ENCODE measurements at regions of chr9 and their contacts with region 1.

Region 1: DNA sequence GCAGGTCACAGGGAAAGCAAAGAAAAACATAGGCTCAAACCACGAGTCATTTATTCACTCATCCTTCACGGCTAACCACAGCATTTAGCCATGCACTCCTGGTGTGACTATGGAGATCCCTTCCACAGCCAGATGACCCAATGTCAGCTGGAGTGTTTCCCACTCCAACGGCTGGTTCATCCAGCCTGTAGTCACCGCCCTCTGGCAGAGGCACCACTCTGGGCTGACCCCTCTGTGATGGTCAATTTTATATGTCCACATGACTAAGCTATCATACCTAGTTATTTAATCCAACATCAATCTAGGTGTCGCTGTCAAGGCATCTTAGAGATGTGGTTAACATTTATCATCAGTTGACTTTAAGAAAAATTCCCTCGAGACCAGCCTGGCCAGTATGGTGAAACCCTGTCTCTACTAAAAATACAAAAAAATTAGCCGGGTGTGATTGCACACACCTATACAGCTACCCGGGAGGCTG is 9.5 kb upstream of the PHF19 start:
- DNase-seq: no peak
- H3K4me3 ChIP-seq: no peak overlapping the region
- H3K27ac ChIP-seq: no peak overlapping the region
- H3K4me1 ChIP-seq: peaks cover 32% of the 10 kb centered on the region
- H3K27me3 ChIP-seq: no peaks in the 10 kb centered on the region
- CTCF ChIP-seq: no peak
- POLR2A ChIP-seq: no peak

Region 2: DNA sequence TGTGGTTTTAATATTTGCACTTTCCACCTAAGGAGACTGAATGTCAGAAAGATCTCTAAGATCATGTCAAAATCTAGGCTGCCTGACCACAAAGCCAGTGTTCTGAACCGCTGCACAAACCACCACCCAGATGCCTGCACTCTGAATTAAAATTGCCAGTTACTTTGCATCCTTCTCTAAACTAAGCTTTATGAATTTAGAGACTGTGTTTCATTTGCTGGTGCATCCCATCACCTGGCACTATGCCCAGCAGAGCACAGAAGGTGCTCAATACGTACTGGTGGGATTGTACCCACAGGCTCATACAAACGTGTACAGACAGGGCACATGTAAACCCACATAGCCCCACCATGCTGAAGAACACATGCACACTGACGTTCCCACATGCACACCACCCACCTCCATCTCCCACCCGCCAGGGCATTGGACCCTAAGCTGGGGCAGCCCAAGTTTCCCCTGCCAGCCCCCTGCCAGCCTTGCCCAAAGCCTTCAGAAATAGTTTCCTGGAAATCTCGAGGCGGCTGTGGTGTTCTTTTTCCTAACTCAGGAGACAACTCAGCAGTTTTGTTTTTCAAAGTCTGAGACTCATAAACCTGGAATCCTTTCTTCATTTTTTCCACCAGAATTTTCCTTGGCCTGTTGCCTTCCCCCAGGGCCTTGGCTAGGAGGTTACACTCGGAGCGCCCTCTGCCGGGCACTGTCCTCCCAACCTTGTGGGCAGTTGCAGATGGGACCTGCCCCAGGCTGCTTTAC is 49.7 kb after region 1 on chr9:
- intact Hi-C with region 1: loop called (anchors 5 kb)
- DNase-seq: peak in 1 of 2 donors; percentile 92
- H3K4me3 ChIP-seq: peak overlapping the region; percentile 16 to 31
- H3K27ac ChIP-seq: peak overlapping the region; percentile 93
- H3K4me1 ChIP-seq: peaks cover 65% of the 10 kb centered on the region
- H3K27me3 ChIP-seq: no peaks in the 10 kb centered on the region
- CTCF ChIP-seq: peak; percentile 63 to 94 (median 72)
- POLR2A ChIP-seq: no peak

Region 3: DNA sequence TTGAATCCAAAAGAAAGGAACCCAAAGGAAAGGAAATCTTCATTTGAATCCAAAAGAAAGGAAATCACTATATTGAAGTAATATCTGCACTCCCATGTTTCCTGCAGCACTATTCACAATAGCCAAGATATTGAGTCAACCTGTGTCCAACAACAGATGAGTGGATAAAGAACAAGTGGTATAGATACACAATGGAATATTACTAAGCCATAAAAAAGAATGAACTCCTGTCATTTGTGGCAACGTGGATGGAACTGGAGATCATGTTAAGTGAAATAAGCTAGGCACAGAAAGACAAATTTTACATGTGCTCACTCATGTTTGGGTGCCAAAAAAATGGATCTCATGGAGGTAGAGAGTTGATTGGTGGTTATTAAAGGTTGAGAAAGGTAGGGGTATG is 541.4 kb after region 1 on chr9:
- intact Hi-C with region 1: no loop called
- DNase-seq: no peak
- H3K4me3 ChIP-seq: no peak overlapping the region
- H3K27ac ChIP-seq: no peak overlapping the region
- H3K4me1 ChIP-seq: no peaks in the 10 kb centered on the region
- H3K27me3 ChIP-seq: no peaks in the 10 kb centered on the region
- CTCF ChIP-seq: no peak
- POLR2A ChIP-seq: no peak

Measured in vagina (tissue), 2 donors.